ENCODE measurements at regions of chr6 and their contacts with region 1.

Region 1: DNA sequence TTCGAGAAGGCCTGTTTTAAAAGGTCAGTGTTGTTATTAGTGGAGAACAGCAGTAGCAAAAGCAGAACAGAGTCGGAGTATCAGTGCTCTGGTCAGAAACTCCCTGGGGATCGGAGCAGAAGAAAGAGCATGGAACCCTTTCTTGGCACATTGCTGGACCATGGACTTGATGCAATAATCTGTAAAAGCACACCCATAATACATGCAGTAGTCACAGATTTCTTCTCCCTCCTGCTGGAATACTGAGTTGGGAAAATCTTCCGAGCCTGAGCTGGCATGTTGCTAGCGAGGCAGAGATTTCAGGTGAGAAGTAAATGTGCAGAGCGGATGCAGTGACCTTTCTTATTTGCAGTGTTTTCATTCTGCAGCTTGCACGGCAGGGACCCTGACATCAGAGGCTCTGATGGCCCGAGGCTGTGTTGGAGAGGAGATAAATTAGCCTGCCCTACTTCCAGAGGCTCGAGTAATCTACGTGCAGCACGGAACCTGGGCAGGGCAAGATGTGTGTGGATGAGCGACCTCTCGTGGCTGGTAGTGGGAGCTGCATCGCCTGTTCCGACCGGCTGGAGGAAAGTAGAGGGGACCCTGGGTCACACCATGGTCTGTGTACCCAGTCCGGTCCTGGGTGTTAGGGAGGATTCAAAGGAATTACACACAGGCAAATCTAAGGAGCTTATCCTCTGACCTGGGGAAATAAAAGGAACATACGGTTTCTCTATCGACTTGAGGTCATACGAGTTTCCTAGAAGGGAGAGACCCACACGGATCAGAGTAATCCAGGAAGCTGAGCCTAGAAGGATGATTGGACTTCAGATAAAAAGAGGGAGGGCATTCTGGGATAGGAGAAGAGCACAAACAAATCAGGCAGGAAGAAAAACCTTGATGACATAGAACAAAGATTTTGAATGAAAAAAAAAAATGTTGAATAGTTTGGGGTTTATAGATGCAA is 137.0 kb upstream of the STMND1 start:
- DNase-seq: peak; percentile 66
- H3K4me3 Mint-ChIP-seq: peak overlapping the region; percentile 24
- H3K27ac Mint-ChIP-seq: no peak overlapping the region
- H3K4me1 Mint-ChIP-seq: peaks cover 12% of the 10 kb centered on the region
- H3K27me3 Mint-ChIP-seq: peaks cover 9% of the 10 kb centered on the region
- CTCF ChIP-seq: peak; percentile 75

Region 2: GRCh38 chr6:16849280-16849987 is 115.4 kb before region 1 on chr6:
- CTCF ChIA-PET with region 1: interaction called, 3 read pairs
- intact Hi-C with region 1: loop called (anchors 10 kb)
- DNase-seq: no peak
- H3K4me3 Mint-ChIP-seq: no peak overlapping the region
- H3K27ac Mint-ChIP-seq: peak overlapping the region; percentile 20
- H3K4me1 Mint-ChIP-seq: peaks cover 27% of the 10 kb centered on the region
- H3K27me3 Mint-ChIP-seq: no peaks in the 10 kb centered on the region
- CTCF ChIP-seq: no peak